K562 (cell line): ENCODE measurements at regions of chr4 and their contacts with region 1.

Region 1: GRCh38 chr4:36159208-36159607 is 85.1 kb downstream of the ARAP2 start:
- DNase-seq: no peak
- ATAC-seq: no peak
- H3K4me3 ChIP-seq: no peak overlapping the region
- H3K27ac ChIP-seq: no peak overlapping the region
- H3K4me1 ChIP-seq: no peaks in the 10 kb centered on the region
- H3K27me3 ChIP-seq: no peaks in the 10 kb centered on the region
- CTCF ChIP-seq: no peak
- EP300 ChIP-seq: no peak
- POLR2A ChIP-seq: no peak
- RAD21 ChIP-seq: no peak

Region 2: GRCh38 chr4:36081185-36081584 is 78.0 kb before region 1 on chr4:
- CTCF ChIA-PET with region 1: no interaction called
- POLR2A ChIA-PET with region 1: no interaction called
- in situ Hi-C with region 1: no loop called
- intact Hi-C with region 1: loop called (anchors 2 kb)
- DNase-seq: no peak
- ATAC-seq: no peak
- H3K4me3 ChIP-seq: no peak overlapping the region
- H3K27ac ChIP-seq: no peak overlapping the region
- H3K4me1 ChIP-seq: no peaks in the 10 kb centered on the region
- H3K27me3 ChIP-seq: no peaks in the 10 kb centered on the region
- CTCF ChIP-seq: no peak
- EP300 ChIP-seq: no peak
- POLR2A ChIP-seq: no peak
- RAD21 ChIP-seq: no peak